Transverse colon (tissue), 4 donors: ENCODE measurements at regions of chr9 and their contacts with region 1.

Region 1: DNA sequence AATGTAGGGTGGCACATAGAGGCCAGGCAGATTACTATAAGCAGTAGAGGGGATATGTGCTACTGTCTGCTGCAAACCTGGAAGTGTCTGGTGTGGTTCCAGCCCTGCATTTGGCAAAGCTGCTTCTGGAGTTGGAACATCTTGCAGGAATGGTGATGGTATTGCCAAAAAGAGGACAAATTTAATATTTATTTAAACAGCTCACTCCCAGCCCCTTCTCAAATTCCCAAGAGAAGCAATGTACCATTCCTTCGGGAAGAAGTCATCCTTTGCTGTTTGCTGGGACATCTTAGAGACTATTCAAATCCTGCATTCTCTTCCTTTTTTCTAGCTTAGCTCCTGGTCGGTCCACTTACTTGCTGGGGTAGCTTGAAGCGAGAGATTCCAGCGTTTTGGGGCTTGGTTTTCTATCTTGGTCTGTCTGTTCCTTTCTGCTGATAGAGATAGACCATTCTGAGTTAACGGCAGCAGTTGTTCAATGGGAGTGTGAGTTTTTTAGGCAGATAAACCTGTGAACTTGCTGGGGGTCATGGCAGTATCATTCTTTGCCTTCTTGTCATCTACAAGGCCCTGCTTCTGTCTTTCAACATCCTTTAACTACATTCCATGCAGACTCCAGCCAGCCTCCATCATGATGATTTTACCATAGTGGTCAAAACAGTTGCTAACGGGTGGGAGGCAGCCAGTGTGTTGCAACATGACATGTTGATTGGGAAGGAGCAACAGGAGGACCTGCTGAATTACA is 69.9 kb downstream of the RCL1 start:
- DNase-seq: no peak
- H3K4me3 ChIP-seq: no peak overlapping the region
- H3K27ac ChIP-seq: no peak overlapping the region
- H3K4me1 ChIP-seq: no peaks in the 10 kb centered on the region
- H3K27me3 ChIP-seq: no peaks in the 10 kb centered on the region
- CTCF ChIP-seq: no peak
- EP300 ChIP-seq: no peak
- POLR2A ChIP-seq: no peak

Region 2: DNA sequence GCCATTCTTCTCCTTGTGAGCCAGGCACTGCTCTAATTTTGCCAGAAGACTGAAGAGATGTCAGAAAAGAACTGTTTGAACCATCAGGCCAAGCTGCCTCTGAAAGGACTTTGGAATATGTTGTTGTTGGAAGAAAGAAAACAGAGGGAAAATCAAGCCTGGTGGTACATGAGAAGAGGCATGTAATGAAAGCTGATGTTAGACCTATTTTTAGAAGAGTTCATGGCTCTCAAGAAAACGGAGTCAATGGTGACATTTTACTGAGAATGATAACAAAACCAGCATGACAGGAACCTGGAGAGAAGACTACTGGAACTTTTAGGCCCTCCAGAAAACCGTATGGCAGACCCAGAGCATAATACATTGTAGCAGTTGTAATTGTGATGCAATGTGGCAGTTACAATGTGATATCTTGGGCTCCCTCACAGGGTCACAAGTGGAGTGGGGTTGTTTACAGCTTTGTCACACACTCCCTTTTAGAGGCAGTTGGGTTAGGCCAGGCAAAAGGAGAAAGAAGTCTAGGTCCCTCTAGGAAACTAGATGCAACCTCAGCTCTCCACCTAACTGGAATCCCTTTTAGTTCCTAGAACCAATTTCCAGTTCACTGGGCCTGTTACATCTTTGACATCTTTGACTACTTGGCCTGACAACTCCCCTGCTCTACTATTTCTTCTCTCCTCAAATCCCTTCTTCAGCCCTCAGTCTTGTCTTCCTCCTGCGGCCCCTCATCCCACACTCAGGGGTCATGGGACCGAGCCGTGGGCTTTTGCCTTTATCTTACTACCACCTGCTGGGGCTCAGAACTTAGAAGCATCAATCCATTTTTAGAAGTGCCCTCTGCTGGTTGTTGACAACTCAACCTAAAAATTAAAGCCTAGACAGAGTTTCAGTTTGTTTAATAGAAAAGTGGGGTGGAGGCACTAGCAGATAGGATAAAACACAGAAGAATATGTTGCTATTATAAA is 61.2 kb after region 1 on chr9:
- in situ Hi-C with region 1: loop called in 1 of 4 experiments (anchors 10 kb)
- intact Hi-C with region 1: no loop called
- DNase-seq: no peak
- H3K4me3 ChIP-seq: no peak overlapping the region
- H3K27ac ChIP-seq: no peak overlapping the region
- H3K4me1 ChIP-seq: no peaks in the 10 kb centered on the region
- H3K27me3 ChIP-seq: no peaks in the 10 kb centered on the region
- CTCF ChIP-seq: peak in 3 of 5 experiments; percentile 16 to 28 (median 20)
- EP300 ChIP-seq: no peak
- POLR2A ChIP-seq: no peak